ENCODE measurements at regions of chr5 and their contacts with region 1.

Region 1: GRCh38 chr5:6377905-6378765 is at the start of gene MED10:
- DNase-seq: peak; percentile 77 to 95 (median 92)
- H3K4me3 ChIP-seq: peak within 1 kb of the TSS; percentile 70 to 100 (median 97)
- H3K27ac ChIP-seq: peak within 1 kb of the TSS in 47 of 59 donors; percentile 12 to 89 (median 67)
- H3K27me3 ChIP-seq: peaks cover 0 to 2% (median 0%) of the 10 kb centered on the region in 45 donors
- CTCF ChIP-seq: peak in 9 of 56 donors; percentile 9 to 34 (median 14)
- total RNA-seq, gene MED10: 24.3 to 59.5 (median 44.7) TPM

Region 2: DNA sequence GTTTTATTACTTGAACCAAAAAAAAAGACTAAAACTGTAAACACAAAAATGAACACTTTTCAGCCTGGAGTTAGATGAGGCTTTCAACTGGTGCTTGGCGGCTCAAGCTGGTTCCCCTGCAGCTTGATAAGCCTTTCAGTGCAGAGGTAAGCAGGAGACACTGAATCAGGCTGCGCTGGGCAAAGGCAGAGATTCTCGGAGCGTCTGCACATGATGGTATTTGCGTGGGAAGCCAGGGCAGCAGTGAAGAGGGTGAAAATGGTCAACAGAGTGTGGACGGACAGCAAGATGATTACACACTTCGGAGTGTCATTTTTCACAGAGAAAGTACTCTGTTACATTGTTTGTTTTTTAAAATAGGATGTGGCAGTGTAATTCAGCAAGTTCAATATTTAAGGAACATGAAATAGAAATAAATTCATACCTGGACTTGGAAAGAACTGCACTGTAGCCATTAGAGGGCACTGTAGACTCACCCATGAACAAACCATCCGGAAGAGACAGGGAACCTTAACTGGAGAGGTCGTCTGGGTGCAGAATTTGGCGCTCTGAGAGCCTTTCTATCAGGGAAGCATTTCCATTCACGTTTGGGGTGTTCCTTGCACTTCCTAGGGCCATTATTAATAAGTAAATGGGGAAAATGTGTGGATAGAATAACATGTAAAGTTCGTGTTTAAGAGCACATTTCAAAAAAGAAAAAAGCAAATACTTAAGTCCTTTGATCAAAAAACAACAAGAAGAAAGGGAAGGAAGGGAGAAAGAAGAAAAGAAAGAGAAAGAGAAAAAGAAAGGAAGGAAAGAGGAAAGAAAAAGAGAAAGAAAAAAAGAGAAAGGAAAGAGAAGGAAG is 885.8 kb before region 1 on chr5:
- intact Hi-C with region 1: loop called in 1 of 2 experiments (anchors 10 kb)
- DNase-seq: peak in 2 of 10 donors; percentile 15 to 46
- H3K4me3 ChIP-seq: peak overlapping the region in 1 of 59 donors; percentile 7
- H3K27ac ChIP-seq: no peak overlapping the region
- H3K27me3 ChIP-seq: no peaks in the 10 kb centered on the region
- CTCF ChIP-seq: peak; percentile 28 to 79 (median 63)

Region 3: GRCh38 chr5:6212244-6212643 is 165.9 kb before region 1 on chr5:
- intact Hi-C with region 1: loop called in 1 of 2 experiments (anchors 5 kb)
- DNase-seq: no peak
- H3K4me3 ChIP-seq: no peak overlapping the region
- H3K27ac ChIP-seq: no peak overlapping the region
- H3K27me3 ChIP-seq: no peaks in the 10 kb centered on the region
- CTCF ChIP-seq: no peak

Region 4: DNA sequence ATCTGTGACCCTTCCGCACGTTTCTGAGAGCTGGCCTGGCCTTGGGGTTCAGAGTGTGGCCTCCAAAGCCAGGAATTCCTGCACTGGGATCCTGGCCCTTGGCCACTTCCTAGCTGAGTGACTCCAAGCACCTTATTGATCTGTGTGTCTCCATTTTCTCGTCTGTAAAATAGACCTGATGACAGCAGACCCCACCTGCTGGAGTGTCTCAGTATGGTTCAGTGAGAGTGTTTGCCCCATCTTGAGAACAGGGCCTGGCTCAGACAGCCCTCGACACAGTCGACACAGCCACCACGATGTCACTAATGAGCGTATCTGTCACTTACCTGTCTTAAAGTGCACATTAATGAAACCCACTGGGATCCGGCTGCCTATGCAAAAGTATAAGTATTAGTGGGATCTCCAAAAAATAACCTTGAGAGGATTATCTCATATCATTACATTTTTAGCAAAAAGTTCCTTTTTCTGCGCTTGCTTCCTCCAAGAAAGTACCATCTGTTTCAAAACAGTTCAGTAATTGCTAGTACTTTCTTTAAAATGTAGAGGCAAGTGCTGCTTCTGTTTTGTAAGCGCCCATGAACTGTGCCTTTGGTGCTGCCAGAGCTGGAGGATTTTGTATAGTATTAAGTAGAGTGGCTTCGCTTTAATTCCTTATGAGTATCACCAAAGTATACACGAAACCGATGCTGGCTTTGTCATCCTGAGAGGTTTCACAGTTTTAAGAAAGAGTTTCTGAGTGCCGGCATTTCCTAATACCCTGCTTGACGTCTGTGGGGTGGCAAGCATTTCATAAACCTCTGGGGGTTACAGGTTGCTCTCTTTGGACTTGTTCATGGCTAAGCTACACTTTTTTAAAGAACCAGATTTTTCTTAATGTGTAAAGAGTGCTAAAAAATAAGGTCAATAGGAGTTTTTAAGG is 102.3 kb after region 1 on chr5:
- intact Hi-C with region 1: loop called in 1 of 2 experiments (anchors 10 kb)
- DNase-seq: no peak
- H3K4me3 ChIP-seq: no peak overlapping the region
- H3K27ac ChIP-seq: peak overlapping the region in 16 of 59 donors; percentile 1 to 51 (median 34)
- H3K27me3 ChIP-seq: peaks cover 0 to 95% (median 5%) of the 10 kb centered on the region in 45 donors
- CTCF ChIP-seq: peak in 1 of 56 donors; percentile 14

Region 5: DNA sequence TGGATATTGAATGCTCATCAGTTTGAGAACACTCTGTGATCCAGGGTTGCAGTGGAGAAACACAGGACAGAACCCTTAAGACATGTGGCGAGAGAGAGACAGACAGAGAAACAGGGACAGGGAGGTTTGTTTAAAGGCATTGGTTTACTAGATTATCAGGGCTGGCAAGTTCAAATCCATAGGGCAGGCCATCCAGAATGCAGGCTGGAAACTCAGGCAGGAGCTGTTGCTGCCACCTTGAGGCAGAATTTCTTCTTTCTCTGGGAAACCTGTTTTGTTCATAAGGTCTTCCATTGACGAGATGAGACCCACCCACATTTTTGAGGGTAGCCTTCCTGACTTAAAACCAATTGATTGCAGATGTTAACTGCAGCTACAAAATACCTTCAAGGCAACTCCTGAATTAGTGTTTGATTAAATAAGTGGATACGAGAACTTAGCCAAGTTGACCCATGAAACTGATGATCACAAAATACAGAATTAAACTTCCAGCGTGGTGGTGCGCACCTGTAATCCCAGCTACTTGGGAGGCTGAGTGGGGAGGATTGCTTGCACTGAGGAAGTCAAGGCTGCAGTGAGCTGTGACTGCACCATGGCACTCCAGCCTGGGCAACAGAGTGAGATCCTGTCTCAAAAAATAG is 198.8 kb after region 1 on chr5:
- intact Hi-C with region 1: loop called in 1 of 2 experiments (anchors 10 kb)
- DNase-seq: peak in 2 of 10 donors; percentile 29 to 66
- H3K4me3 ChIP-seq: no peak overlapping the region
- H3K27ac ChIP-seq: no peak overlapping the region
- H3K27me3 ChIP-seq: peaks cover 0 to 59% (median 0%) of the 10 kb centered on the region in 45 donors
- CTCF ChIP-seq: peak; percentile 18 to 69 (median 55)

Region 6: GRCh38 chr5:6712577-6713275 is 334.6 kb after region 1 on chr5:
- intact Hi-C with region 1: loop called (anchors 10 kb)
- DNase-seq: peak; percentile 89 to 97 (median 94)
- H3K4me3 ChIP-seq: peak overlapping the region; percentile 55 to 98 (median 88)
- H3K27ac ChIP-seq: peak overlapping the region; percentile 57 to 99 (median 97)
- H3K27me3 ChIP-seq: no peaks in the 10 kb centered on the region
- CTCF ChIP-seq: peak in 20 of 56 donors; percentile 0 to 60 (median 22)

Measured in dorsolateral prefrontal cortex (tissue), 120 donors.